ENCODE measurements at regions of chr17 and their contacts with region 1.

Region 1: GRCh38 chr17:51103451-51103850 is 17.2 kb downstream of the SPAG9 start:
- DNase-seq: no peak
- ATAC-seq: no peak
- H3K4me3 ChIP-seq: no peak overlapping the region
- H3K27ac ChIP-seq: no peak overlapping the region
- H3K4me1 ChIP-seq: peaks cover 29% of the 10 kb centered on the region
- H3K27me3 ChIP-seq: no peaks in the 10 kb centered on the region
- CTCF ChIP-seq: no peak

Region 2: GRCh38 chr17:51064061-51064735 is 39.3 kb before region 1 on chr17:
- intact Hi-C with region 1: loop called in 1 of 2 experiments (anchors 5 kb)
- DNase-seq: no peak
- ATAC-seq: peak in 1 of 4 donors; percentile 37
- H3K4me3 ChIP-seq: no peak overlapping the region
- H3K27ac ChIP-seq: no peak overlapping the region
- H3K4me1 ChIP-seq: peaks cover under 1% of the 10 kb centered on the region
- H3K27me3 ChIP-seq: no peaks in the 10 kb centered on the region
- CTCF ChIP-seq: no peak

Measured in psoas muscle (tissue), 8 donors.